ENCODE measurements at regions of chr2 and their contacts with region 1.

Region 1: GRCh38 chr2:159286709-159287441 is 372 bp upstream of the WDSUB1 start:
- DNase-seq: peak; percentile 97
- H3K4me3 Mint-ChIP-seq: peak overlapping the region; percentile 87
- H3K27ac Mint-ChIP-seq: peak overlapping the region; percentile 75
- H3K4me1 Mint-ChIP-seq: peaks cover 26% of the 10 kb centered on the region
- H3K27me3 Mint-ChIP-seq: no peaks in the 10 kb centered on the region

Region 2: GRCh38 chr2:157628477-157629415 is 1658.1 kb before region 1 on chr2 and contains the start of gene ACVR1C:
- CTCF ChIA-PET with region 1: no interaction called
- intact Hi-C with region 1: loop called (anchors 5 kb)
- DNase-seq: peak; percentile 83
- H3K4me3 Mint-ChIP-seq: peak within 1 kb of the TSS; percentile 94
- H3K27ac Mint-ChIP-seq: no peak within 1 kb of the TSS
- H3K4me1 Mint-ChIP-seq: peaks cover 37% of the 10 kb centered on the region
- H3K27me3 Mint-ChIP-seq: peaks cover 2% of the 10 kb centered on the region
- total RNA-seq, gene ACVR1C: 3.5 to 3.6 TPM

Region 3: DNA sequence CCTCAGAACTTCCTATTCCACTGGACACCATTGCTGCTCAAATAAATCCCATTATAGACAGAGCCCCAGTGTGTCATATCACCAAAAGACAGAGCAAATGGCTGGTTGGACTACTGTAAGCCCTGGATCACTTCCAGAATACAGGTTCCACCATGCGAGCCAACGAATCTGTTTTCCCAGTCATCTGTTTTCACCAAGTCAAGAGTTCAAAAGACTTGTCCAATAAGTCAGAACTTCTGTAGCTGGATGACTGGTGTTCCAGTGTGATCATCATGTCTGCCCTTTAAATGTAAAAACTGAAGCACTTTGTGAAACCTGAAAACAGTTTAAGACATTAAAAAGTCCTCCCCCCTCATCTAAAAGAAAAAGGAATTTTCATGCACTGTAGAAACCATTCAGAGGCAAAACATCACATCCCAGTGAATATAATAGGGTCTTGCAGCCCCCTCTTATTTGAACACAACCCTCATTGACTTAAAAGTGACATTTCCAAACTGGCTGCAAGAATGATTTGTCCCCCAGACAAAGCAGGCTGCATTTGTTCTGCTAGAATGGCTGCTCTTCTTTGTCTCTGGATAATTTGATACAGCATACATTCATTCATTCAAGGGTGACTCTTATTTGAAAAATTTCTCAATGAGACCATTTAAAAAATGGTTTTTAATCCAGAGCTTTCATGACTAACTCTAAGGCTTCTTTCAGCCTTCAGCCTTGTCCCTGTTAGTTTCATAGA is 383.0 kb before region 1 on chr2:
- CTCF ChIA-PET with region 1: interaction called, 3 read pairs
- intact Hi-C with region 1: loop called (anchors 5 kb)
- DNase-seq: no peak
- H3K4me3 Mint-ChIP-seq: no peak overlapping the region
- H3K27ac Mint-ChIP-seq: no peak overlapping the region
- H3K4me1 Mint-ChIP-seq: no peaks in the 10 kb centered on the region
- H3K27me3 Mint-ChIP-seq: no peaks in the 10 kb centered on the region

Region 4: DNA sequence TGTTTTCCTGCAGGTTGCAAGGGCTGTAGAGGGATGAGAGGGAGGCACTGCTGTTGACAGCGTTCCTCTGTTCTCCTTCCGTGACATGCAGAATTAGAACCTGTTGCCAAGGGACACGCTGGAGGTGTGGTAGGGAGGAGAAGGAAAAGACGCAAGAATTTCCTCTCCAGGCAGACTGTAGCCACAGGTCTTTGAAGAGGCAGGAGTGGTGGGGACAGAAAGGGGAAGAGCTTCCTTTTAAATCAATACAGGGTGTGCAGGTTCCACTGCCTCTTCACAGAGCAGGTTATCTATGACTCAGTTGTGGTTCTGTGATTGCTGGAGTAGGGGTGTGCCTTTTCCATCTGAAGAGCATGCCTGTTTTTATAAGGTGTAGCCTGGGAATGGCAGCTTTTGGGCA is 133.4 kb before region 1 on chr2:
- CTCF ChIA-PET with region 1: no interaction called
- intact Hi-C with region 1: loop called (anchors 5 kb)
- DNase-seq: no peak
- H3K4me3 Mint-ChIP-seq: no peak overlapping the region
- H3K27ac Mint-ChIP-seq: no peak overlapping the region
- H3K4me1 Mint-ChIP-seq: peaks cover 18% of the 10 kb centered on the region
- H3K27me3 Mint-ChIP-seq: no peaks in the 10 kb centered on the region

Region 5: DNA sequence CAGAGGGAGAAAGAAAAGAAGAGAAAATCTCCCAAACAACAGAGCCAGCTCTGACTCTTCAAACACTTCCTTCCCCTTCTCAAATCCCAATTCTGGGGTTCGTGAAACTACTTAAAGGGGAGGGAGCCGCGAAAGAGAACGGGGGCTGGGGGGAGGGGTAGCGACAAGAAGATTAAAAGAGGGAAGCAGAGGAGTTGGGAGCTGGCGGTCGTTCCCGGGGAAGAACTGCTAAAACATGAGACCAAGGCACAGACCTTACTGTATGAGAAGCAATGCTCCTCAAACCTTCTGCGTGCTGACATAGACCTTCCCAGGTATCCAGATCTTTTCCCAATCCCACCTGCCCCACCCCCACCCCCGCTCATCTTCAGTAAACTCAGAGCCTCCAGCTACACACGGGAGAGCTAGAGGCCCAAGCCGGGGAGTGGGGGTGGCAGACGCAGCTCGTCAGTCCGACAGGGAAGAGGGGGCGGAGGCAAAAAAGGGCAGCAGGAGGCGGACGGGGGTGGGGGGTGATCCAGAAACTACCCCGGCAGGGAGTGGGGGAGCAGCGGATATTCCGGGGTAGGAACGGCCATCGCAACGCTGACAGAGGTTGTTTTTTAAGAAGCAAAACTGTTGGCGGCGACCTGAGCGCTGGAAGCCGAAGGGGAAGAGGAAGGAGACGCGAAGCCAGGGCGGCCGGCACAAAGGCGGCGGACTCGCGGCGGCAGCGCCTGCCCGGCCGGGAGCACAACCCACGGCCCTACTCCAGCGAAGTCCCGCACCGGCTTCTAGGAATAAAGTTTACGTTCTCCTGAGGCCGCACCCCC is 328.5 kb after region 1 on chr2:
- CTCF ChIA-PET with region 1: no interaction called
- intact Hi-C with region 1: loop called (anchors 2 kb)
- DNase-seq: peak; percentile 53
- H3K4me3 Mint-ChIP-seq: peak overlapping the region; percentile 72
- H3K27ac Mint-ChIP-seq: no peak overlapping the region
- H3K4me1 Mint-ChIP-seq: peaks cover 6% of the 10 kb centered on the region
- H3K27me3 Mint-ChIP-seq: peaks cover 15% of the 10 kb centered on the region

Region 6: GRCh38 chr2:159921752-159922404 is 635.0 kb after region 1 on chr2:
- CTCF ChIA-PET with region 1: no interaction called
- intact Hi-C with region 1: loop called (anchors 2 kb)
- DNase-seq: peak; percentile 92
- H3K4me3 Mint-ChIP-seq: no peak overlapping the region
- H3K27ac Mint-ChIP-seq: no peak overlapping the region
- H3K4me1 Mint-ChIP-seq: peaks cover 22% of the 10 kb centered on the region
- H3K27me3 Mint-ChIP-seq: peaks cover 27% of the 10 kb centered on the region

Measured in activated naive CD4-positive, alpha-beta T cell treated with anti-CD3 and anti-CD28 coated beads for 36 hours (primary cell).